ENCODE measurements at regions of chr18 and their contacts with region 1.

Region 1: GRCh38 chr18:57273194-57273593 is 79.2 kb upstream of the ST8SIA3 start:
- DNase-seq: peak; percentile 44
- H3K4me3 Mint-ChIP-seq: peak overlapping the region; percentile 16
- H3K27ac Mint-ChIP-seq: peak overlapping the region; percentile 66
- H3K4me1 Mint-ChIP-seq: peaks cover 90% of the 10 kb centered on the region
- H3K27me3 Mint-ChIP-seq: no peaks in the 10 kb centered on the region
- CTCF ChIP-seq: no peak

Region 2: GRCh38 chr18:57004366-57005121 is 268.6 kb before region 1 on chr18:
- CTCF ChIA-PET with region 1: no interaction called
- intact Hi-C with region 1: loop called (anchors 5 kb)
- DNase-seq: no peak
- H3K4me3 Mint-ChIP-seq: peak overlapping the region; percentile 39
- H3K27ac Mint-ChIP-seq: peak overlapping the region; percentile 87
- H3K4me1 Mint-ChIP-seq: peaks cover 34% of the 10 kb centered on the region
- H3K27me3 Mint-ChIP-seq: no peaks in the 10 kb centered on the region
- CTCF ChIP-seq: no peak

Region 3: GRCh38 chr18:57051657-57052044 is 221.5 kb before region 1 on chr18:
- CTCF ChIA-PET with region 1: no interaction called
- intact Hi-C with region 1: loop called (anchors 5 kb)
- DNase-seq: peak; percentile 59
- H3K4me3 Mint-ChIP-seq: no peak overlapping the region
- H3K27ac Mint-ChIP-seq: peak overlapping the region; percentile 95
- H3K4me1 Mint-ChIP-seq: peaks cover 30% of the 10 kb centered on the region
- H3K27me3 Mint-ChIP-seq: no peaks in the 10 kb centered on the region
- CTCF ChIP-seq: no peak